ENCODE measurements at regions of chr18 and their contacts with region 1.

Region 1: DNA sequence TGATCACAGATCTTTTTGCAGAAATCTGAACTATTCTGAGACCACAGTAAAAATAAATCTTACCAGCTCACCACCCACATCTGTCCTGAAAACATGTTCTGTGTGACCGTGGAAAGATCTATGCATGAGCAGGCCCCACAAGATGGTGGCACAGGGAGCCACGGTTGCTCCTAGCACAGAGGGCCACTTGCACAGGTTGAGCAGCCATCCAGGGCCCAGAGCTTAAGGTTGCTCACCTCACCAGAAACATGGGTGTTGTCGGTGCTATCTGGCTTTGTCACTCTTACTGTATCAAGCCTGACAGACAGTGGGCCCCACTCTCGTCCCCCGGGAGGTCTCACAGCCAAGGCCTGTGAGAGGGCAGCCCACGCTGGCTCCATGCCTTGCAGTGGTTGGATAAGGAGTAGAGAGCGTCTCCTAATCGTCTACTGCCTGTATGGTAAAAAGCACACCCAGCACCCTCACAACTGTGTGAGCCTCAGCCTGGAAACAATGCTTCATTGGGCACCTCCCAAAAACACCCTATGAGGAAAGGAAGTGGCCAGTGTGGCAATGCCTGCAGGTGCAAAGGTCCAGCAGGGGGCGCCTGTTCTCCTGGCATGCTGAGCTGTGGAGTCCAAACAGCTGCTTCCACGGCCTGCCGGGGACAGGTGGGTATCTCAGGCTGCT is 19.6 kb downstream of the TUBB6 start:
- DNase-seq: peak; percentile 87
- H3K4me3 Mint-ChIP-seq: no peak overlapping the region
- H3K27ac Mint-ChIP-seq: no peak overlapping the region
- H3K4me1 Mint-ChIP-seq: no peaks in the 10 kb centered on the region
- H3K27me3 Mint-ChIP-seq: no peaks in the 10 kb centered on the region

Region 2: DNA sequence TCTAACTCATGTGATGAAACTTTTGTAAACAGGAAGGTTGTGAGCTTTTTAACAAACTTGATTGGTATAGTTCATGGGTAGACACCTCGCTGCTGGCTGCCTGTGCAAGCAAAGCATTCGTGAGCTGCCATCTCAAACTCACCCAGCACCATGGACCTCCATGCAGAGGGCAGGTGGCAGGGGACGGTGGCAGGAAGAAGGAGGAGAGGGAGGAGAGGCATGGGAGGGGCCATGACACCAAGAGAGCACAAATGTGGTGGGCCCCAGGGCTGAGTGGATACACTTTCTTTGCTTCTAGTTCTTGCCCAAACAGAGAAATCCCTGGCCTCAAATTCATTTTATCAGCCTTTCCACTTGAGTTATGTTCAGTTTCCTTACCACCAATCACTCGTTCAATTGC is 20.3 kb after region 1 on chr18:
- CTCF ChIA-PET with region 1: interaction called, 11 read pairs
- intact Hi-C with region 1: no loop called
- DNase-seq: no peak
- H3K4me3 Mint-ChIP-seq: no peak overlapping the region
- H3K27ac Mint-ChIP-seq: no peak overlapping the region
- H3K4me1 Mint-ChIP-seq: no peaks in the 10 kb centered on the region
- H3K27me3 Mint-ChIP-seq: no peaks in the 10 kb centered on the region

Region 3: DNA sequence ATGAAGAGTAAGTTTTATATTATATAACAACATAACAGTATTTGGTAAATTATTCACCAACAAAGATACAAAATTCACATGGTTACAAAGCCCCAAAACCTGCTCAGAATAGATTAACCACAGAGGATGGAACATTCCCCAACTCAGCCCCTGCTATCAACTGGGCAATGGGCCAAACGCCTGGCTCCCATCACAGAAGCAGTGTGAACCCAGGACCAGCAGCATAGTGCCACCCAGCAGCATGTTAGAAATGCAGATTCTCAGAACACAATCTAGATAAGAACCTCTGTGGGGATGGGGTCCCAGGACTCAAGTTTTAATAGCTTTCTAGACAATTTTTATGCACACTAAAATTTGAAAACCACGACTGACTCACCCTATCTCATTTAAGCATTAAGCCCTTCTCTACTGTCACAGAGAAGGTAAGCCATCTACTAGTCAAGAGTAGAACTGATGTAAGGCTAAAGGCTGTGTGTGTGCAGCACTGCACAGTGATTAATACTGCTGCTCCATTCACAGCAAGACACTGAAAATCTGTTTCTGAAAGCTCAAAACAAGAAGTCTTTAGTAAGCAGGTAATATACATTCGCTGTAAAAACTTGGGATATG is 34.2 kb after region 1 on chr18:
- CTCF ChIA-PET with region 1: interaction called, 12 read pairs
- intact Hi-C with region 1: no loop called
- DNase-seq: no peak
- H3K4me3 Mint-ChIP-seq: no peak overlapping the region
- H3K27ac Mint-ChIP-seq: no peak overlapping the region
- H3K4me1 Mint-ChIP-seq: no peaks in the 10 kb centered on the region
- H3K27me3 Mint-ChIP-seq: no peaks in the 10 kb centered on the region

Measured in activated naive CD4-positive, alpha-beta T cell treated with anti-CD3 and anti-CD28 coated beads for 36 hours (primary cell).